ENCODE measurements at regions of chr1 and their contacts with region 1.

Region 1: DNA sequence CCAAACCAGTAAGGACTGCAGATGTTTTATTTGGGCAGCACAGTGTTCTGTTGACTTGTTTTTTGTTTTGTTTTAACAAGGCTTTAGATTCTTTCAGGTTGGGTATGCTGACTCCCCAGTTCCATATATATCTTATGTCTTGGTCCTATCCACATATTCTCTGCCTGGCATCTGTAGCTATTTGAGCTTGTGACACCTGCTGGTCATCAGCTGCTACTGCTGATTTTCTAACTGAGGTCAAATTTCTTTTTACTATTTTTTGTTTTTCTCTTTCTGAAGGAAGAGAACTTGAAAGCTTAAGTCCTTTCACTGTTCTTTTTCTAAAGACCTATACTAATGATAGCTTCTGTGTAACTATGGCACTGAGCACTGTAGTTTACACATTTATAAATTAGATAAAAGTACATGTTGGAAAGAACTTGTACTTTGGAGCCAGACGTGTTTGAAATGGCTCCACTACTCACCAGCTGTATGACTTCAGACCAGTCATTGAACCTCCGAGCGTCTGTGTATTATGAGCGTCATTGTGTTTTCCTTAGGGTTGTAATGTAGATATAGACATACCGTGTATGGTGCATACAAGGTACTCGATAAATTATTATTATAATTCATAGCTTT is 109.4 kb downstream of the NRDC start:
- DNase-seq: peak in 1 of 6 donors; percentile 35
- ATAC-seq: peak; percentile 75 to 94 (median 90)
- H3K4me3 ChIP-seq: no peak overlapping the region
- H3K27ac ChIP-seq: no peak overlapping the region
- H3K4me1 ChIP-seq: peaks cover 0 to 1% (median 0%) of the 10 kb centered on the region in 3 donors
- H3K27me3 ChIP-seq: no peaks in the 10 kb centered on the region
- CTCF ChIP-seq: peak; percentile 35 to 73 (median 66)

Region 2: GRCh38 chr1:51627678-51628077 is 141.4 kb before region 1 on chr1:
- intact Hi-C with region 1: loop called in 2 of 3 experiments (anchors 10 kb)
- DNase-seq: no peak
- ATAC-seq: peak in 3 of 4 donors; percentile 50 to 64 (median 56)
- H3K4me3 ChIP-seq: no peak overlapping the region
- H3K27ac ChIP-seq: no peak overlapping the region
- H3K4me1 ChIP-seq: peaks cover 0 to under 1% (median 0%) of the 10 kb centered on the region in 3 donors
- H3K27me3 ChIP-seq: no peaks in the 10 kb centered on the region
- CTCF ChIP-seq: no peak

Region 3: DNA sequence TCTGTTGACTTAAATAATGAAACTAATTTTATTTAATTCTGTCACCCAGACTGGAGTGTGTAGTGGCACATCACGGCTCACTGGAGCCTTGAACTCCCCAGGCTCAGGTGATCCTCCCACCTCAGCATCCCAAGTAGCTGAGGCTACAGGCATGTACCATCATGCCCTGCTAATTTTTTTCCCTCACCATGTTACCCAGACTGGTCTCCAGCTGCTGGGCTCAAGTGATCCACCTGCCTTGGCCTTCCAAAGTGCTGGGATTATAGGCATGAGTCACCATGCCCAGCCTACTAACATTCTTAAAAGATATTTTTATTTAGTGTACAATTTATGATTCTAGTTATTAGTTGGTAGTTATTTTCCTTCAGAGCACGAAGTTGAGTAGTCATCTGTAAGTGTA is 60.0 kb after region 1 on chr1:
- intact Hi-C with region 1: no loop called
- DNase-seq: no peak
- ATAC-seq: no peak
- H3K4me3 ChIP-seq: no peak overlapping the region
- H3K27ac ChIP-seq: no peak overlapping the region
- H3K4me1 ChIP-seq: no peaks in the 10 kb centered on the region
- H3K27me3 ChIP-seq: no peaks in the 10 kb centered on the region
- CTCF ChIP-seq: no peak

Region 4: DNA sequence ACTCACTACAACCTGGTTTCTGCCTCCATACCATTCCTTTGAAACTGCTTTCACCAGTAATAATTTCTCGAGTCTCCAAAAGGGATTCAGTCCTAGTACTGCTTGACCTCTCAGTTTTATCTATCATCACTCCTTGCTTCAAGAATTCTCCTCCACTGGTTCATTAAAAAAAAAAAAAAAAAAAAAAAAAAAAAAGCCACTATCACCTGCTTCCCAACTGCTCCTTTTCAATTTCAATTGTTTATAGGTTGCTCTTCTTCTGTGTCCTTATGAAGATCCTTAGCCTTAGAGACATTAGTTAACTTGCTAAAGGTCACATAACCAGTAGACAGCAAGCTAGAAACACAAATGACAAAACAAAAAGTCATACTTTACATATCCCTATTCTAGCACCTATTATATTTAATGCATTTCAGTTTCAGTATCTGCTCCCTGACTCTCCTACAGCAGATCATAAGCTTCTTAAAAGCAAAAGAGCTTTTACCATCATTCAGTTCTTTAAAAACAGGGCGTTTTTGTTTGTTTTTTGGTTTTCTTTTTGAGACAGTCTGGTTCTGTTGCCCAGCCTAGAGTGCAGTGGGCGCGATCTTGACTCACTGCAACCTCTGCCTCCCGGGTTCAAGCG is 102.4 kb after region 1 on chr1:
- intact Hi-C with region 1: no loop called
- DNase-seq: no peak
- ATAC-seq: no peak
- H3K4me3 ChIP-seq: no peak overlapping the region
- H3K27ac ChIP-seq: no peak overlapping the region
- H3K4me1 ChIP-seq: peaks cover 10 to 20% (median 17%) of the 10 kb centered on the region in 3 donors
- H3K27me3 ChIP-seq: no peaks in the 10 kb centered on the region
- CTCF ChIP-seq: no peak